ENCODE measurements at regions of chr15 and their contacts with region 1.

Region 1: DNA sequence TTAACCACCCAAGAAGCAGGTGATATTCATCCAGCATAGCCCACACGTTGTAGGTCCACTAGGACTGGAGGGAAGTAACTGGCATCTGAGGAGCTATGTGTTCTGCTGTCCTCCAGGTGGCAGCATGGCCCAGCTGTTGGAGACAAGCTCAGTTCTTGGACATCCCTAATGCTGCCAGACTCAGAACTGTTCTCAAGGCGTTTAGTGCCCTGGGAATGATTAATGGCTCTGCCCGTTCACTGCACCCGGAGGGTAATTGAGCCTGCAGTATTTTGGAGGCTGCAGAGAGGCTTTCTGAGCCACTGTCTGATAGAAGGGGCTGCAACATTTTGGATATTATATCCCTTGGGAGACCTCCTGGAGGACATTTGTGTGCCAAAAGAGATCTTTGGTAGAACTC is 521.2 kb upstream of the SEMA6D start:
- DNase-seq: peak; percentile 87
- ATAC-seq: peak; percentile 100
- H3K4me3 ChIP-seq: no peak overlapping the region
- H3K27ac ChIP-seq: no peak overlapping the region
- H3K4me1 ChIP-seq: no peaks in the 10 kb centered on the region
- H3K27me3 ChIP-seq: peaks cover 2% of the 10 kb centered on the region
- CTCF ChIP-seq: peak; percentile 91
- POLR2A ChIP-seq: peak; percentile 47; the same call in 1 of the 2 replicates
- RAD21 ChIP-seq: peak; percentile 100

Region 2: GRCh38 chr15:46856839-46857502 is 339.1 kb before region 1 on chr15:
- CTCF ChIA-PET with region 1: no interaction called
- POLR2A ChIA-PET with region 1: no interaction called
- dilution Hi-C with region 1: no loop called
- in situ Hi-C with region 1: no loop called
- intact Hi-C with region 1: no loop called
- DNase-seq: no peak
- ATAC-seq: no peak
- H3K4me3 ChIP-seq: no peak overlapping the region
- H3K27ac ChIP-seq: no peak overlapping the region
- H3K4me1 ChIP-seq: no peaks in the 10 kb centered on the region
- H3K27me3 ChIP-seq: no peaks in the 10 kb centered on the region
- CTCF ChIP-seq: no peak
- POLR2A ChIP-seq: no peak
- RAD21 ChIP-seq: no peak

Region 3: DNA sequence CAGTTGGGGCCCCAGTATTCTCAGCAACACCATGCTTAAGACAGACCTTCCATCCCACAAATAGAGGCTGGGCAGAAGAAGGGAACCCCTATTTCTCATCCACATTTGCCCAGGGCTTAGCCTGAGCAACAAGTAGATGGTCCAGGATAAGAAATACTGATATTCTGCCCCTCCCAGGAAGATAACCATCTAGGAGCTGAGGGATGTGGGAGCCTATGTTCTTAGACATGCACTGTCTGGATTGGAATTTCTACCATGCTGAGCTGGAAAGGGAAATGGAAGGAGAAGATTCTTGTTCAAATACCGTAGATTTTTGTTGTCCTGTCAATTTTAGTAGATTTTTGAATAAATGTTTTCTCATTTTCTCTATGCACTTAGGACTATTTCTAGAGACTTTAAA is 70.5 kb after region 1 on chr15:
- CTCF ChIA-PET with region 1: no interaction called
- POLR2A ChIA-PET with region 1: no interaction called
- dilution Hi-C with region 1: no loop called
- in situ Hi-C with region 1: no loop called
- intact Hi-C with region 1: no loop called
- DNase-seq: no peak
- ATAC-seq: no peak
- H3K4me3 ChIP-seq: no peak overlapping the region
- H3K27ac ChIP-seq: no peak overlapping the region
- H3K4me1 ChIP-seq: no peaks in the 10 kb centered on the region
- H3K27me3 ChIP-seq: no peaks in the 10 kb centered on the region
- CTCF ChIP-seq: no peak
- POLR2A ChIP-seq: no peak
- RAD21 ChIP-seq: no peak

Region 4: DNA sequence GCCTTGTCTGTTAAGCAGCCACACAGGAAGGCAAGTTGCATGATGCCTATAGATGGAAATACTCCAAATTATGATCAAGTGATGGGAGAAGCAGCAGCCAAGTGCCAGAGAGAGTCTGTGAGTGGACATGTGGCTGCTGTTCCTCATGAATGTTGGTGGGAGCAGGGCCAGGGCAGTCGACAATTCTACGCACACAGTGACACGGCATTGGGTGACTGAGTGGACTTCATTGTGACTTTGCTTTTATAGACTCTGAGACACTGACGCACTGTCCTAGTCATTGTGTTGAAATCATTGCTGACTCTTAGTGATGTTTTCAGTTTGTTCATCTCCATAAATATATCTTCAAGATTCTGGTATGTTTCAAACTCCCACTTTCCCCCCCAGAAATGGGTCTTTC is 274.9 kb after region 1 on chr15:
- CTCF ChIA-PET with region 1: interaction called, 3 read pairs
- POLR2A ChIA-PET with region 1: no interaction called
- dilution Hi-C with region 1: no loop called
- in situ Hi-C with region 1: no loop called
- intact Hi-C with region 1: loop called (anchors 1 kb)
- DNase-seq: peak; percentile 67
- ATAC-seq: peak; percentile 33
- H3K4me3 ChIP-seq: no peak overlapping the region
- H3K27ac ChIP-seq: no peak overlapping the region
- H3K4me1 ChIP-seq: peaks cover 3% of the 10 kb centered on the region
- H3K27me3 ChIP-seq: no peaks in the 10 kb centered on the region
- CTCF ChIP-seq: no peak
- POLR2A ChIP-seq: no peak
- RAD21 ChIP-seq: no peak

Region 5: GRCh38 chr15:47987908-47988532 is 792.0 kb after region 1 on chr15:
- CTCF ChIA-PET with region 1: interaction called, 29 read pairs
- POLR2A ChIA-PET with region 1: no interaction called
- dilution Hi-C with region 1: no loop called
- in situ Hi-C with region 1: loop called (anchors 5 kb)
- intact Hi-C with region 1: loop called (anchors 1 kb)
- DNase-seq: peak; percentile 70
- ATAC-seq: peak; percentile 99
- H3K4me3 ChIP-seq: no peak overlapping the region
- H3K27ac ChIP-seq: no peak overlapping the region
- H3K4me1 ChIP-seq: no peaks in the 10 kb centered on the region
- H3K27me3 ChIP-seq: no peaks in the 10 kb centered on the region; the same call in 1 of the 2 replicates
- CTCF ChIP-seq: peak; percentile 88
- POLR2A ChIP-seq: no peak
- RAD21 ChIP-seq: peak; percentile 90

Region 6: GRCh38 chr15:48250640-48251076 is 1054.6 kb after region 1 on chr15:
- CTCF ChIA-PET with region 1: interaction called, 3 read pairs
- POLR2A ChIA-PET with region 1: no interaction called
- dilution Hi-C with region 1: no loop called
- in situ Hi-C with region 1: no loop called
- intact Hi-C with region 1: loop called (anchors 1 kb)
- DNase-seq: peak; percentile 79
- ATAC-seq: peak; percentile 82
- H3K4me3 ChIP-seq: no peak overlapping the region
- H3K27ac ChIP-seq: no peak overlapping the region
- H3K4me1 ChIP-seq: no peaks in the 10 kb centered on the region
- H3K27me3 ChIP-seq: peaks cover 6% of the 10 kb centered on the region
- CTCF ChIP-seq: peak; percentile 75
- POLR2A ChIP-seq: no peak
- RAD21 ChIP-seq: peak; percentile 77